ENCODE measurements at regions of chr3 and their contacts with region 1.

Region 1: DNA sequence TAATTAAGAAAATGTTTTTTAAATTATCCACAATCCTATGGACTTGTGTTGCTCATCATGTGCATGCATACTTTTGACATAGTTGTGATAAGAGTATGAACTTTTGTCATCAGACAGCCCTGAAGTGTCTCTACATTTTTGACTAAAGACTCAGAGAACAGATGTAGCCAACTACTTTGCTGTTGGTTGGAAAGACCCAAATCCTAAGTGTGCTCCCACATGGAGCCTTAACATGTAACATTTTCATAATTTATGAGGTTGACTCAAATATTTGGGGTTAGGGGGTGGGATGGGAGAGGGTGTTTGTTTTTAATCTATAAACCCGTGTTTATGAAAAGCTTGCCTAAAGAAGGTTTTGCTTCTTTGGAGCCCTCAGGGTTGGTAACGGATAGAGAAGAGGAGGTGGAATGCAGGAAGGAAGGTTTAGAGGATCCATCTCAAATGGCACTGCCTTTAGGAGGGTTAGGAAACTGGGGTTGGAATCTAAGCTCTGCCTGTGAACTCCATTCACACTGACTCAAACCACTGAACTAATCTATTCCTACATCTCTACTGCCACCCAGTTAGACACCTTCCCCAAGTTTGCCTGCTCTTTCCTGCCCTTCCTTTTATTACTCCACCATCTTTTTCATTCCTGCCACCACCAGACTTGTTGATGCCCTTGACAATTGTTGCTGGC is 3.7 kb downstream of the BOC start:
- DNase-seq: no peak
- H3K4me3 ChIP-seq: no peak overlapping the region
- H3K27ac ChIP-seq: peak overlapping the region in 2 of 3 donors; percentile 4 to 6
- H3K4me1 ChIP-seq: peaks cover 21 to 23% of the 10 kb centered on the region in 2 donors
- H3K27me3 ChIP-seq: no peaks in the 10 kb centered on the region
- CTCF ChIP-seq: no peak
- POLR2A ChIP-seq: no peak

Region 2: DNA sequence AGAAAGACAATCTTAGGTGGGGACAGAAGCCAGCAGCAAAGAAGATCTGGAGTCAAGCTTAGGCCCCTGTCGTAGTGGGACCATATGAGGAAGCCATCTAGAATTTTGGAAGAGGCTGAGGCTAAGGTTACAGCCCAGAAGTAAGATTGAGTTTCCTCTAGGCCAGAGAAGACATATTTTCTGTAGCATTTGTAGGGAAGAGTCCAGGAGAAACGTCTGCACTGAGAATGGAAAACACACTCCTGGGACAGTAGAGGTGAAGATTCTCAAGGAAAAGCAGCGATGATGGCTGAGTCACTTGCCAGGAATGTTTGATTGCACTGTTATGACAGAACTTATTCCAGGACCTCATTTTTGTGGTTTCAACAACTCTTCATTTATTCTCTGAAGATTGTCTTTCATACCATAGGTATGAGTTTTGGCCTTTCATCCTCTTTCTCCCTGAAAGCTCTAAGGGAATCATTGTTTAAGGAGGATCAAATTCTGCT is 117.1 kb before region 1 on chr3:
- intact Hi-C with region 1: no loop called
- DNase-seq: no peak
- H3K4me3 ChIP-seq: no peak overlapping the region
- H3K27ac ChIP-seq: no peak overlapping the region
- H3K4me1 ChIP-seq: no peaks in the 10 kb centered on the region
- H3K27me3 ChIP-seq: no peaks in the 10 kb centered on the region
- CTCF ChIP-seq: no peak
- POLR2A ChIP-seq: no peak

Region 3: DNA sequence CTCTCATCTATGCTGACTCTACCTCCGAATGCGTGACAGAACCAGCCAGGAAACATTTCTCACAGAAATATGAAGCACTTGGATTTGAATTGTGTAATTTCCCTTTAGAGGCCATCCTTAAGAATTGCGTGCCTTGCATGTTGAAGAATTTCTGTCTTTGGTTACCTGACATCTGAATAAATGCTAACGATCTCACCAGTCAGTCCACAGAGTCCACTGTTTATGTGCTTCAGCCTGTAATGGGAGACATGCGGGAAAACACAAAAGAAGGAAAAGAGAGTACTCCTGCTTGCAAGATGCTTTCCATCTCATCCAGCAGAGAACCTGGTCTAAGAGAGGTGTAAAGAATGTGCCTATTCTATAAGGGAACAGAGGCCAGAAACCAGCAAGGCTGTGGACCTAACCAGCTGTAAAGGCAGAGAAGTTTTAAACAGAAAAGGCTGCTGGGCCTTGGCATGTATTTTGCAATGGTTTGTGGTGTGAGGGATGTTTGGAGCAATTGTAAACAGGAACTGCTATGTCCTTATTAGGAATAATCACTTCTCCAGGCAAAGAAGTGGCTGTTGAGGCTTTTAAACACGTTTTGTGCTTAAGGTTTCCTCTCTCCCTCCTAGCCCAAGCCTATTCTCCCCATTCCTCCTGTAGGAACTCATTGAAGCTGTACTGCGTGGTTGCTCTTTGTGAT is 40.1 kb before region 1 on chr3:
- intact Hi-C with region 1: no loop called
- DNase-seq: no peak
- H3K4me3 ChIP-seq: no peak overlapping the region
- H3K27ac ChIP-seq: peak overlapping the region; percentile 20 to 47 (median 45)
- H3K4me1 ChIP-seq: peaks cover 20 to 30% of the 10 kb centered on the region in 2 donors
- H3K27me3 ChIP-seq: no peaks in the 10 kb centered on the region
- CTCF ChIP-seq: no peak
- POLR2A ChIP-seq: no peak

Region 4: GRCh38 chr3:113254171-113254948 is 39.3 kb after region 1 on chr3:
- intact Hi-C with region 1: loop called (anchors 5 kb)
- DNase-seq: no peak
- H3K4me3 ChIP-seq: no peak overlapping the region
- H3K27ac ChIP-seq: peak overlapping the region in 2 of 3 donors; percentile 39 to 48
- H3K4me1 ChIP-seq: peaks cover 21 to 28% of the 10 kb centered on the region in 2 donors
- H3K27me3 ChIP-seq: no peaks in the 10 kb centered on the region
- CTCF ChIP-seq: no peak
- POLR2A ChIP-seq: no peak

Region 5: DNA sequence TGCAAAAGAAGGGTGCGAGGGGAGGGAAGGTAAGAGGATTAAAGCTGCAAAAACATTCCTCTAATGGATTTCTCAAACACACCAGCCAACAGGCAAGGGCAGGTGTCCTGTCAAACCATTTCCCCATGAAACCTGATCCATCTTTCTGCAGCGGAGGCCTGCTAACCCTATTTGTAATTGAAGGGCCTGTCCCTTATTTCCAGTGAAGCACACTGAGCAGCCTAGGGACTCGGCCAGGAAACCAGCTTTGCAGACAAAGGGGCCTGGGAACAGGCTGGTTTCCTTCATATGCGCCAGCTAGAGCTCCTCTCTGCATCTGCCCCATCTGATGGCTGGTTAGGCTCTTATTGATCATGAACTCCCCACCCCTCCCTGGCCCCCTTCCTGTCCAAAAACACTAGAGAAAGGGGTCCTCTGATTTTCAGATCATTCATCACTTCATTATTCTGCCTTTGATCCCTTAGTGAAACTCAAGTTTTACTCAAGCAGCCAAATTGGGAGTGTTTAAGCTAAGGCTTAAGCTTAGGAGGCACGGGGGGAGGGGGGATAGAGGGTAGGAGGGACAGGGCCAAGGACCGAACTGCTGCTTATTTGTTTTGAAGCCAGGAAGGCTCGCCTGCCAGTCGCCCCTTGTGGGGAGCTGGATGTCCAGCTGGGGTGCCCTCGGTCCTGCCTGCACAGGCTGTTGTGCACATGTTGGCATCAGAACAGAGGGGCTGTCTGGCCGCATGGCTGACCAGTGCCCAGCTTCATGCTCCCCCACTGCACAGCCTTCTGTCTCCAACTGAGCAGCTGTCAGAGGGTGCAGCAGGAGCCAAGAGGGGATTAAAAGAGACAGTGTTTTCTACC is 49.5 kb after region 1 on chr3:
- intact Hi-C with region 1: no loop called
- DNase-seq: peak; percentile 61 to 62
- H3K4me3 ChIP-seq: no peak overlapping the region
- H3K27ac ChIP-seq: peak overlapping the region; percentile 51 to 86 (median 81)
- H3K4me1 ChIP-seq: peaks cover 52 to 70% of the 10 kb centered on the region in 2 donors
- H3K27me3 ChIP-seq: no peaks in the 10 kb centered on the region
- CTCF ChIP-seq: no peak
- POLR2A ChIP-seq: peak in 1 of 2 donors; percentile 6

Measured in thyroid gland (tissue), 4 donors.